ENCODE measurements at regions of chr1 and their contacts with region 1.

Region 1: GRCh38 chr1:119675349-119676345 is 27.6 kb upstream of the ZNF697 start:
- DNase-seq: peak; percentile 96
- ATAC-seq: peak; percentile 56
- H3K4me3 ChIP-seq: peak overlapping the region; percentile 70
- H3K27ac ChIP-seq: peak overlapping the region; percentile 98
- H3K4me1 ChIP-seq: peaks cover 40% of the 10 kb centered on the region
- H3K27me3 ChIP-seq: no peaks in the 10 kb centered on the region
- CTCF ChIP-seq: peak; percentile 93

Region 2: DNA sequence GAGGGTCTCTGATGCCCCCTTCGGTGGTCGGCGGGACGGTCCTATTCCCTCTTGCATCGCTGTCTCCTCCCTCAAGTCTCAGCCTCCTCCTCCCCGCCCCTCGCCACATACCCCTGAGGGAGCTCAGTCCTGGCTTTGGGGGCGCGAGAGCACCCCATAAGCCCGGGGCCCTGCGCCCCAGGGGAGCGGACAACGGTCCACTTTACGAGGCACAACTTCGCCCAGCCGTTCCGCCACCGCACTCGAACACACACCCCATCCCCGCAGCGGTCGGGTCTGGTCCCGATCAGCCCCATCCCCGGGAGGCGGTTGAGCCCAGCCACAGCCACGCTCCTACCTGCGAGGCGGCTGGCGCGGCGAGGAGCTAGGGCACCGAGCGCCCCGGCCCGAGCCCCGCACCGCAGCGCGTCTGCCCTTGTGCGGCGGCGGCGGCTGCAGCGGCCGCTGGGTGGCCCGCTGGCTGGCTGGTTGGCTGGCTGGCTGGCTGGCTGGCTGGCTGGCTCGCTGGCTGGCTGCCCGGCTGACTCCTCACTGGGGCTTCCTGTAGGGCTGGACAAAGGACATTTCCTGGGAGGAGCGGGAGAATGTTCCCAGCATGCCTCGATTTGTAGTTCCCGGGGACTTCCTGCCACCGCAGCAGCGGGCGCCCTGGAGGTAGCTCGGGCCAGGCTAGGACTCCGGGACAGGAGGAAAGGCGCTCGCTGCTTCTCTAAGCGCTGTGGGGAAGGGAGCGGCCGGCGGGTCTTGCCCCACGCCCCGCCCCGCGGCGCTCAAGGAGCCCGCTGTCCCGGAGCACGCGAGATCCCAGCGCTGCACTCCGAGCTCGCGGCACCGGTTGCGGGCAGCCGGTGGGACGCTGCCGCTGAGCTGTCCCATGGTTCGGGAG is 27.7 kb before region 1 on chr1 and contains the start of gene ZNF697:
- CTCF ChIA-PET with region 1: interaction called, 11 read pairs
- POLR2A ChIA-PET with region 1: no interaction called
- intact Hi-C with region 1: loop called (anchors 1 kb)
- DNase-seq: peak; percentile 95
- ATAC-seq: peak; percentile 95
- H3K4me3 ChIP-seq: peak within 1 kb of the TSS; percentile 92
- H3K27ac ChIP-seq: peak within 1 kb of the TSS; percentile 74
- H3K4me1 ChIP-seq: peaks cover 20% of the 10 kb centered on the region
- H3K27me3 ChIP-seq: no peaks in the 10 kb centered on the region
- CTCF ChIP-seq: no peak; the same call in 1 of the 2 replicates
- total RNA-seq, gene ZNF697: 3.9 and 5.3 TPM in 2 replicates

Region 3: DNA sequence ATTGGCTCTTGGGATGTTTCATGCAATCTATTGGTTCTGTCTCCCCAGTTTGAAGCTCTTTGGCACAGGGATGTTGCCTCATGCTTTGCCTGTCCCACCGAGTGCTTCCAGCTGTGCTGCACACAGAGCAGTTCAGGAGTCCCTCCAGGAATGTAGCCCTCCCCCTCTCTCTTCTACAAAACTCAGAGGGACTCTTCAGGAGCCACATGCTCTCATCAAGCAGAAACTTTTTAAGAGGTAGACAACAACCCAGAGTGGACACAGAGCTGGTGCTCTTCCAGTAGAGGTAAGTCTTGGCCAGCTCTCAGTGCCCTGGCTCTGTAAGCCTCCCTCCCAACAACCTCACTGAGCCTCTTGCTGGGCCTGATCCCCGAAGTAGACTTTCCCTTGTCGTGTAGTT is 16.0 kb before region 1 on chr1:
- CTCF ChIA-PET with region 1: no interaction called
- POLR2A ChIA-PET with region 1: no interaction called
- intact Hi-C with region 1: no loop called
- DNase-seq: no peak
- ATAC-seq: no peak
- H3K4me3 ChIP-seq: no peak overlapping the region
- H3K27ac ChIP-seq: peak overlapping the region; percentile 48; the same call in 1 of the 2 replicates
- H3K4me1 ChIP-seq: peaks cover 28% of the 10 kb centered on the region
- H3K27me3 ChIP-seq: no peaks in the 10 kb centered on the region
- CTCF ChIP-seq: no peak

Region 4: DNA sequence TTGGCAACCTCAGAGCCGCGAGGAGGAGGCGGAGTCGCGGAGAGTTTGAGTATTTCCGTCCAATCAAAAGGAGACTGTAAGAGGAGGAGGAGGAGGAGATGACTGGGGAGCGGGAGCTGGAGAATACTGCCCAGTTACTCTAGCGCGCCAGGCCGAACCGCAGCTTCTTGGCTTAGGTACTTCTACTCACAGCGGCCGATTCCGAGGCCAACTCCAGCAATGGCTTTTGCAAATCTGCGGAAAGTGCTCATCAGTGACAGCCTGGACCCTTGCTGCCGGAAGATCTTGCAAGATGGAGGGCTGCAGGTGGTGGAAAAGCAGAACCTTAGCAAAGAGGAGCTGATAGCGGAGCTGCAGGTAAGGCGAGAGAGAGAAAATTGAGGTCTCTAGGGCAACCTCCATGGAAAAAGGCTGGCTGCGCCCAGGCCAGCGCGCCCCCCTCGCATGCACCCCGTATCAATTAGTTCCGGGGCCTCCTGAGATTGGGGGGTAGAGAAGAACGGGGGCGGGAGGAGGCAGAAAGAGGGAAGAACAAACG is 36.2 kb after region 1 on chr1 and contains the start of gene PHGDH:
- CTCF ChIA-PET with region 1: interaction called, 3 read pairs
- POLR2A ChIA-PET with region 1: no interaction called
- intact Hi-C with region 1: loop called (anchors 1 kb)
- DNase-seq: peak; percentile 89
- ATAC-seq: peak; percentile 84
- H3K4me3 ChIP-seq: peak within 1 kb of the TSS; percentile 98
- H3K27ac ChIP-seq: peak within 1 kb of the TSS; percentile 20; the same call in 1 of the 2 replicates
- H3K4me1 ChIP-seq: peaks cover 18% of the 10 kb centered on the region
- H3K27me3 ChIP-seq: no peaks in the 10 kb centered on the region
- CTCF ChIP-seq: no peak
- total RNA-seq, gene PHGDH: 134 and 155 TPM in 2 replicates

Region 5: GRCh38 chr1:119779869-119780356 is 104.3 kb after region 1 on chr1:
- CTCF ChIA-PET with region 1: no interaction called
- POLR2A ChIA-PET with region 1: no interaction called
- intact Hi-C with region 1: loop called (anchors 10 kb)
- DNase-seq: peak; percentile 70
- ATAC-seq: peak; percentile 42
- H3K4me3 ChIP-seq: peak overlapping the region; percentile 46
- H3K27ac ChIP-seq: peak overlapping the region; percentile 27
- H3K4me1 ChIP-seq: peaks cover 44% of the 10 kb centered on the region
- H3K27me3 ChIP-seq: no peaks in the 10 kb centered on the region
- CTCF ChIP-seq: no peak

Region 6: GRCh38 chr1:119853155-119853554 is 177.5 kb after region 1 on chr1:
- CTCF ChIA-PET with region 1: no interaction called
- POLR2A ChIA-PET with region 1: no interaction called
- intact Hi-C with region 1: no loop called
- DNase-seq: no peak
- ATAC-seq: no peak
- H3K4me3 ChIP-seq: no peak overlapping the region
- H3K27ac ChIP-seq: no peak overlapping the region
- H3K4me1 ChIP-seq: no peaks in the 10 kb centered on the region
- H3K27me3 ChIP-seq: no peaks in the 10 kb centered on the region
- CTCF ChIP-seq: no peak

Measured in PC-3 (cell line).